ENCODE measurements at regions of chr11 and their contacts with region 1.

Region 1: DNA sequence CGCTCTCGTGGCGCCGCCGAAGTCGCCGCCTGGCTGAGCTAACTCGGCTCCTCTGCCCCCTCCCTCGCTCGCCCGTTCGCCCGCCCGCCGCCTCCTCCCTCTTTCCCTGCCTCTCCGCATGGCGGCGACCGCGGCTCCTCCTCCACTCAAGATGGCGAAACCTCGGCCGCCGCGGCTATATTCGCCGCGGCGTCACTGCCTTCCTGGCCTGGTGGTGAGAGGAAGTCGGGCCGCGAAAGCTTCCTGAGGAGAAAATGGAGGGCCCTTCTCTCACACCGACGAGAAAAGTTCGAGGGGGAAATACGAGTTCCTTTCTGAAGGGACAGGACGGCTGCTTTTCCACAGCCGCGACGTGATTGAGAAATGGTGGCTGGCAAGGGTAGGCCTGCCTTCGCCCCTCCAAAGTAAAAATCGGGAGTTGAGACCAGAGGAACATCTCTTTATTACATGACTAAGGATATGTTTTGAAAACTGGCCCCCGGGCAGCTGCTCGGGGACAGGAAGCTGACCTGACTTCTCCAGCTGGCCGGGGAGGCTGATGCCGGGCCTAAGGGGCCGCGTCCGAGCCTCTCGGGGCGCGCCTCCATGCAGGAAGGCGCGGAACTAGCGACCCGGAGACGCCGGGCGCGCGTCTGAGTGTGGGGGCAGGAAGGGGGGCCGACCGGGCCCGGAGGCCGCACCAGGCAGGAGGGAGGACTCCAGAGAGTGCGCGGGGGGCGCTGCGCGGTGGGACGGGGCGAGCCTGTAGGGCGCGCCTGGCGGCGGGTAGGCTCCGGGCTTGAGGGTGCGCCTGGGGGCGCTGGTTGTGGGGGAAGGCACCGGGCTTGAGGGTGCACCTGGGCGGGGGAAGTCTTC is at the start of gene DDX6:
- DNase-seq: peak; percentile 45
- ATAC-seq: peak; percentile 70
- H3K4me3 ChIP-seq: peak within 1 kb of the TSS; percentile 96 to 99
- H3K27ac ChIP-seq: peak within 1 kb of the TSS; percentile 96
- H3K4me1 ChIP-seq: peaks cover 14 to 39% of the 10 kb centered on the region in 2 experiments
- H3K27me3 ChIP-seq: no peaks in the 10 kb centered on the region
- CTCF ChIP-seq: peak in 2 of 3 experiments; percentile 16 to 17; a peak in 2 of 6 replicates
- POLR2A ChIP-seq: no peak
- RAD21 ChIP-seq: no peak; the same call in 1 of the 2 replicates
- total RNA-seq, gene DDX6: 150 TPM

Region 2: GRCh38 chr11:118621071-118621783 is 170.1 kb before region 1 on chr11:
- CTCF ChIA-PET with region 1: no interaction called
- POLR2A ChIA-PET with region 1: no interaction called
- RAD21 ChIA-PET with region 1: no interaction called
- intact Hi-C with region 1: no loop called
- DNase-seq: peak; percentile 51
- ATAC-seq: peak; percentile 79
- H3K4me3 ChIP-seq: peak overlapping the region; percentile 62 to 84
- H3K27ac ChIP-seq: peak overlapping the region; percentile 96
- H3K4me1 ChIP-seq: peaks cover 61 to 73% of the 10 kb centered on the region in 2 experiments
- H3K27me3 ChIP-seq: no peaks in the 10 kb centered on the region
- CTCF ChIP-seq: no peak
- POLR2A ChIP-seq: peak; percentile 46
- RAD21 ChIP-seq: no peak

Region 3: DNA sequence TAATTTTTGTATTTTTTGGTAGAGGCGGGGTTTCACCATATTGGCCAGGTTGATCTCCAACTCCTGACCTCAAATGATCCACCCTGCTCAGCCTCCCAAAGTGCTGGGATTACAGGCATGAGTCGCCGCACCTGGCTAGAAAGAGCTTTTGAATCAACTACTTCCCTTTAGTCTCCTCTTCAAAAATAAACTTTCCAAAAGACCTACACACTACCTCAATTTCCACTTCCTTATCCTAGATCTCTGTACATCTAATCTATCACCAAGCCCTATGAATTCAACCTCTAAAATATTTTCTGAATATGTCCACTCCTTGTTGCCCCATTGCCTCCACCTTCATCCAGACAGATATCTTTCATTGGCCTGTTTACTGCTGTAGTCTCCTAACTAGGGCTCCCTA is 12.8 kb after region 1 on chr11:
- CTCF ChIA-PET with region 1: no interaction called
- POLR2A ChIA-PET with region 1: interaction called, 18 read pairs
- RAD21 ChIA-PET with region 1: no interaction called
- intact Hi-C with region 1: no loop called
- DNase-seq: no peak
- ATAC-seq: no peak
- H3K4me3 ChIP-seq: no peak overlapping the region
- H3K27ac ChIP-seq: no peak overlapping the region
- H3K4me1 ChIP-seq: no peaks in the 10 kb centered on the region
- H3K27me3 ChIP-seq: no peaks in the 10 kb centered on the region
- CTCF ChIP-seq: no peak
- POLR2A ChIP-seq: no peak
- RAD21 ChIP-seq: no peak

Region 4: DNA sequence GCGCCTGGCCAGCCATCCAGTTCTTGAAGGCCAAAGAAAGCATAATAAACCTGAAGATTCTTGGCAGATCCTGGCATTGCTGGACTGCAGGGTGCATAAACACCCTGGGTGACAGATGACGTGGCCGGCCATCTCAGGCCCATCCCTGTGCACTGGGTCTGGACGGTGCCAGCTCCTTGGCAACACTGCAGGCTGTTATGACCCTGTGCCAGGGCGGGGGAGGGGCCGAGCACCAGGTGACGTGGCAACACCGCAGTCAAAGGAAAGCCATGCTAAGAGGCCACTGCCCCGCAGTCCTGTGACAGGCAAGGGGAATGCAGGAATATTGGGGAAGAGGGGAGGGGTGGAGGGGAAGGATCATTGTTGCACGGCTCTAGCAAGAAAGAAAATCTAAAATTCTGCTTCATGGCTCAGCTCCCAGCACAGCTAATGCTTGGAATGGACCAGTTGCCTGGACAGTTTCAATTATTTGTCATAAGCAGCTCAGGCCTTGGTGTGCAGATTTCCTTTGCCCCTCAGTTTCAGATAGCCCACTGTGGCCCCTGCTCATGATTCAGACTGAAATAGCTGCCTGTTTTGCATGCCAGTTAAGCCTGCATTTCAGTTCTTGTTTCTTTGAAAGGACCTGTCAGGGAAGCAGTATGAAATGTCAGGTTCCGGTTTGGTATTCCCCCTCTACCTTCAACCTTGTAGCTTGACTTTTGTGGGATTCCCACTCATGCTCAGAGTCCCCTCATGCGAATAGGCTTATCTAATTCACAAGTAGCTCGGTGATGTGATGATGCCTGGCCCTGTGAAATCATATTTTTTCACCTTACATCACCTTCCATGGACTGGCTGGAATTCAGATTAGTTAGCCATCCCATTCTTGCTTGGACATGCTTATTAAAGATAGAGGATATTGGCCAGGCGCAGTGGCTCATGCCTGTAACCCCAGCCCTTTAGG is 29.3 kb after region 1 on chr11:
- CTCF ChIA-PET with region 1: interaction called, 3 read pairs
- POLR2A ChIA-PET with region 1: interaction called, 14 read pairs
- RAD21 ChIA-PET with region 1: no interaction called
- intact Hi-C with region 1: no loop called
- DNase-seq: peak; percentile 50
- ATAC-seq: peak; percentile 96
- H3K4me3 ChIP-seq: peak overlapping the region; percentile 1 to 25; a peak in 3 of 4 replicates
- H3K27ac ChIP-seq: peak overlapping the region; percentile 9
- H3K4me1 ChIP-seq: peaks cover 15 to 21% of the 10 kb centered on the region in 2 experiments
- H3K27me3 ChIP-seq: no peaks in the 10 kb centered on the region
- CTCF ChIP-seq: no peak
- POLR2A ChIP-seq: no peak
- RAD21 ChIP-seq: no peak

Region 5: GRCh38 chr11:118928108-118928870 is 137.0 kb after region 1 on chr11:
- CTCF ChIA-PET with region 1: interaction called, 7 read pairs
- POLR2A ChIA-PET with region 1: interaction called, 5 read pairs
- RAD21 ChIA-PET with region 1: no interaction called
- intact Hi-C with region 1: loop called (anchors 2 kb)
- DNase-seq: peak; percentile 96
- ATAC-seq: peak; percentile 68
- H3K4me3 ChIP-seq: peak overlapping the region; percentile 73 to 75
- H3K27ac ChIP-seq: peak overlapping the region; percentile 100
- H3K4me1 ChIP-seq: peaks cover 42 to 82% of the 10 kb centered on the region in 2 experiments
- H3K27me3 ChIP-seq: no peaks in the 10 kb centered on the region
- CTCF ChIP-seq: peak in 2 of 3 experiments; percentile 92 to 95; a peak in 4 of 6 replicates
- POLR2A ChIP-seq: no peak
- RAD21 ChIP-seq: no peak

Measured in HCT116 (cell line).